ENCODE measurements at regions of chr15 and their contacts with region 1.

Region 1: GRCh38 chr15:41116116-41116871 is at the start of gene INO80:
- DNase-seq: peak; percentile 99
- H3K4me3 ChIP-seq: peak within 1 kb of the TSS; percentile 89 to 100 (median 96)
- H3K27ac ChIP-seq: peak within 1 kb of the TSS; percentile 96 to 100 (median 100)
- H3K4me1 ChIP-seq: peaks cover 0 to 18% (median 8%) of the 10 kb centered on the region in 4 donors
- H3K27me3 ChIP-seq: peaks cover 0 to 1% (median 0%) of the 10 kb centered on the region in 3 donors
- CTCF ChIP-seq: no peak
- EP300 ChIP-seq: peak in 1 of 4 donors; percentile 69
- POLR2A ChIP-seq: peak; percentile 46 to 90
- total RNA-seq, gene INO80: 17.1 to 36.6 (median 19.4) TPM

Region 2: GRCh38 chr15:39961051-39961450 is 1155.2 kb before region 1 on chr15:
- intact Hi-C with region 1: no loop called
- DNase-seq: no peak
- H3K4me3 ChIP-seq: no peak overlapping the region
- H3K27ac ChIP-seq: no peak overlapping the region
- H3K4me1 ChIP-seq: peaks cover 0 to 4% (median 0%) of the 10 kb centered on the region in 4 donors
- H3K27me3 ChIP-seq: no peaks in the 10 kb centered on the region
- CTCF ChIP-seq: no peak
- EP300 ChIP-seq: no peak
- POLR2A ChIP-seq: no peak

Region 3: GRCh38 chr15:40941528-40942336 is 174.6 kb before region 1 on chr15:
- intact Hi-C with region 1: loop called (anchors 10 kb)
- DNase-seq: peak; percentile 86
- H3K4me3 ChIP-seq: peak overlapping the region; percentile 40 to 65 (median 60)
- H3K27ac ChIP-seq: peak overlapping the region; percentile 74 to 87 (median 86)
- H3K4me1 ChIP-seq: peaks cover 0 to 24% (median 16%) of the 10 kb centered on the region in 4 donors
- H3K27me3 ChIP-seq: no peaks in the 10 kb centered on the region
- CTCF ChIP-seq: peak in 2 of 4 experiments; percentile 35 to 52
- EP300 ChIP-seq: no peak
- POLR2A ChIP-seq: no peak

Region 4: GRCh38 chr15:41180206-41180789 is 64.0 kb after region 1 on chr15:
- intact Hi-C with region 1: no loop called
- DNase-seq: no peak
- H3K4me3 ChIP-seq: no peak overlapping the region
- H3K27ac ChIP-seq: no peak overlapping the region
- H3K4me1 ChIP-seq: no peaks in the 10 kb centered on the region
- H3K27me3 ChIP-seq: no peaks in the 10 kb centered on the region
- CTCF ChIP-seq: no peak
- EP300 ChIP-seq: no peak
- POLR2A ChIP-seq: no peak

Region 5: GRCh38 chr15:41230650-41231533 is 114.6 kb after region 1 on chr15 and contains the starts of genes CHP1 and EXD1:
- intact Hi-C with region 1: loop called (anchors 1 kb)
- DNase-seq: peak; percentile 99
- H3K4me3 ChIP-seq: peak within 1 kb of the TSS; percentile 75 to 78 (median 78)
- H3K27ac ChIP-seq: peak within 1 kb of the TSS; percentile 91 to 93 (median 91)
- H3K4me1 ChIP-seq: peaks cover 0 to 32% (median 30%) of the 10 kb centered on the region in 4 donors
- H3K27me3 ChIP-seq: no peaks in the 10 kb centered on the region
- CTCF ChIP-seq: peak; percentile 90 to 98 (median 96)
- EP300 ChIP-seq: peak in 2 of 4 donors; percentile 6 to 37
- POLR2A ChIP-seq: peak; percentile 85 to 86
- total RNA-seq, gene CHP1: 101 to 118 (median 105) TPM
- total RNA-seq, gene EXD1: not detected

Region 6: GRCh38 chr15:41331833-41332787 is 215.8 kb after region 1 on chr15 and contains the start of gene OIP5:
- intact Hi-C with region 1: loop called (anchors 2 kb)
- DNase-seq: peak; percentile 99
- H3K4me3 ChIP-seq: peak within 1 kb of the TSS; percentile 71 to 93 (median 74)
- H3K27ac ChIP-seq: peak within 1 kb of the TSS; percentile 59 to 77 (median 74)
- H3K4me1 ChIP-seq: peaks cover 0 to 17% (median 14%) of the 10 kb centered on the region in 4 donors
- H3K27me3 ChIP-seq: no peaks in the 10 kb centered on the region
- CTCF ChIP-seq: peak; percentile 24 to 85 (median 74)
- EP300 ChIP-seq: no peak
- POLR2A ChIP-seq: no peak
- total RNA-seq, gene OIP5: 0.71 to 1.1 TPM in 2 of 4 donors, not detected in the others

Measured in sigmoid colon (tissue), 7 donors.